Activated CD8-positive, alpha-beta T cell treated with anti-CD3 and anti-CD28 coated beads, Interleukin-2, amount 10 ng/mL, durations not matched to agents 7 days and 5 days (primary cell): ENCODE measurements at regions of chr10 and their contacts with region 1.

Region 1: DNA sequence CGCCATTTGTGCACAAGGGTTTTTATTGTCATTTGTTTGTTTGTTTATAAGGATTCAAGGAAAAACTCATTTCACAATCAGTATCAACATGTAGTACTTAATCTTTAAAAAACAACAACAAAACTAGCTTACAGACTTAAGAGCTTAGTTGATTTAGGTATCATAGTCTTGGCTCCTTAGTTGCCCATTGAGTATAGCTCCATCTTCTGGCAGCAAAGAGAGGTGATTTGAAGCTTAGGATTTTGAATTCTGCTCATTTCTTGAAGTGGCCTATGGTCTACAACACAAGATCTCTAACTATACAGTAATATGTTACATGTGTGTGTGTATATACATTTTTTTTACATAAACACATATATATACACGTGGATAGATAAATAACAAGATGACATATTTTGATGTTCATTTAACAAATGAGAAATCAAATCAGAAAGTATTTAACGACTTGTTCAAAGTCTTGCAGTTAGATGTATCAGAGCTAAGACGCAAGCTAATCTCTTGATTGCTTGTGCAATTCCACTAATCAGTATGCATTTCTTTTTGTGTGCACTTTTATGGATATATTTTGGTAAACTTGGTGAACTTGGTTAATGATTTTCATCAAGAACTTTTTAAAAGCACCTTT is 307.3 kb downstream of the CAMK1D start:
- DNase-seq: no peak
- ATAC-seq: peak; percentile 70
- H3K4me3 Mint-ChIP-seq: no peak overlapping the region
- H3K27ac Mint-ChIP-seq: no peak overlapping the region
- H3K4me1 Mint-ChIP-seq: peaks cover 13% of the 10 kb centered on the region
- H3K27me3 Mint-ChIP-seq: no peaks in the 10 kb centered on the region

Region 2: DNA sequence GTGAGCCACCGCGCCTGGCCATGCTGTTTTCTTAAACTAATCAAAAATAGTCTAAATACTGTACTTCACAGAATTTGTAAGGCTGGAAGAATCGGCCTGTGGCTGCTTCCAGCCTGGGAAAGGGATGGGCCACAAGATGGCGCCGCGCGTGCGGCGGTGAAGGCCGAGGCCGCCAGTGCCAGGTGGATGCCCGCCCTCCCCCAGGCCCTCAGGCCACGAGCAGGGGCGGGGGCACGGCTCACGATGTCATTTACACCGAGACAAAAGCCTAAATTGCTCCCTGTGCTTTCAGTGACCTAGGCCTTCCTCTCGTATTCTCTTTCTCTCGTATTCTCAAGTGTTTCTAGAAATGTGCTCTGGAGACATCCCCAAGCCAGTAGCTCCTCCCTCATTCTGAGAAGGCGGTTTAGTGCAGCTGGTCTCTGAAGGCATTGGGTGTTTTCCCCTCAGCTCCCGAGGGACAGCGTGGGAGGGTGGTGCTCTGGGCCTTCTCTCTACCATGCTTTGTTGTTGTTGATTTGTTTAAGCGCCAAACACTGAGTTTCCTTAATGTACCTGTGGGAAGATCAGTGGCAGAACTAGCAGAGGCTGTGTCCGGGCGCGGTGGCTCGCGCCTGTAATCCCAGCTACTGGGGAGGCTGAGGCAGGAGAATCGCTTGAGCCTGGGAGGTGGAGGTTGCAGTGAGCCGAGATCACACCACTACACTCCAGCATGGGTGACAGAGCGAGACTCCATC is 392.3 kb before region 1 on chr10:
- CTCF ChIA-PET with region 1: interaction called, 65 read pairs
- POLR2A ChIA-PET with region 1: no interaction called
- DNase-seq: peak; percentile 69
- ATAC-seq: peak; percentile 80
- H3K4me3 Mint-ChIP-seq: peak overlapping the region; percentile 33
- H3K27ac Mint-ChIP-seq: no peak overlapping the region
- H3K4me1 Mint-ChIP-seq: peaks cover 18% of the 10 kb centered on the region
- H3K27me3 Mint-ChIP-seq: no peaks in the 10 kb centered on the region

Region 3: DNA sequence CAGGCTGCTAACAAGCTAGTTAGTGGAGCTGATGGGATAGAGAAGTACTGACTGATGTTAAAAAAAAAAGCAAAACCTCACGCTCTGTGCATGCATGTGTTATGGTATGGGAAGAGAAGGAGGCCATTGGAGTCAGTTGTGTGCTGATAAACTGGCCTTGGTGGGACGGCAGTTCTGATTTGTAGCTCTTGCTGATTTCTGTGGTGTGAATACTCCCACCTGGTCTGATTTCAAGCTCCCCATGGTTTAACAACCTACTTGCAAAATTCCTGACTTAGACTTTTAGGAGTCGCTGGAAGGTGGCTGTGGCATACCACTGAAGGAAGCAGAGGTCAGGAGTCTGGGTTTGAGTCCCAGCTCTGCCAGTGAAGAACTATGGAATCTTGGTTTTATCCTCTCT is 292.1 kb before region 1 on chr10:
- CTCF ChIA-PET with region 1: interaction called, 15 read pairs
- POLR2A ChIA-PET with region 1: no interaction called
- DNase-seq: no peak
- ATAC-seq: no peak
- H3K4me3 Mint-ChIP-seq: no peak overlapping the region
- H3K27ac Mint-ChIP-seq: no peak overlapping the region
- H3K4me1 Mint-ChIP-seq: peaks cover 21% of the 10 kb centered on the region
- H3K27me3 Mint-ChIP-seq: no peaks in the 10 kb centered on the region

Region 4: DNA sequence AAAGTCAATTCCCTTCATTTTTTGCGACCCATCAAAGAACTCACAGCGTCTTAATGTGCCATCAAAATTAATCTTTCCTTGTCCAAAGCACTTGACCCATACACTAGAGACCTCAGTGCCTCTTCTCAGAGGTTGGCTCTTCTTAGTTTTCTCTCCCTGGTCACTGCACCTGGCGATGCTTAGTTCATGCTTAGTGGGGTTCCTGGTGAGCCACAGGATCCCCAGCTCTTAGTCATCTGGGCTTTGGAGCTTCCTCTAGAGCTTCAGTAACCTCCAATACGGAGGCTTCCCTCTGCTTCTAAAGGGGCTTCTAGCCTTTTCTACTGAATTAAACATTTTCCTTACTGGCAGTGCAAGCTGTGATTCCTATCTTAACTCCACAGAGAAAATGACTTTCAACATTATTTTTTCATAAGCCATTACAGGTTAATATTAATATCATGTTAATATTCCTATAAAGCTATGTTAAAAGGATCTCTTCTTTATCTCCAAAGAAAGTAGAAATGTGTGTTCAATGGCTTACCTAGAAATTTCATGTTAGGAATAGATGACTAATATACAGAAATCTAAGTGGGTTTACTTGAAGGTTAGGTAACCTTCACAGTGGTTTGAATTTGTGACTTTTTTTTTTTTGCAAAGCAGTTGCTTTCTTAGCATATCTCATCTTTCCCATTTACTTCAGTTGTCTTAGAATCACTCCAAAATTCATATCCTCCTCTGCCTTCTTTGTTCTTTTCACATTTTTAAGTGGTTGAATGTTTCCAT is 12.1 kb before region 1 on chr10:
- CTCF ChIA-PET with region 1: interaction called, 17 read pairs
- POLR2A ChIA-PET with region 1: no interaction called
- DNase-seq: no peak
- ATAC-seq: no peak
- H3K4me3 Mint-ChIP-seq: no peak overlapping the region
- H3K27ac Mint-ChIP-seq: no peak overlapping the region
- H3K4me1 Mint-ChIP-seq: peaks cover 7% of the 10 kb centered on the region
- H3K27me3 Mint-ChIP-seq: no peaks in the 10 kb centered on the region